Naive thymus-derived CD4-positive, alpha-beta T cell (primary cell): ENCODE measurements at regions of chr2 and their contacts with region 1.

Region 1: DNA sequence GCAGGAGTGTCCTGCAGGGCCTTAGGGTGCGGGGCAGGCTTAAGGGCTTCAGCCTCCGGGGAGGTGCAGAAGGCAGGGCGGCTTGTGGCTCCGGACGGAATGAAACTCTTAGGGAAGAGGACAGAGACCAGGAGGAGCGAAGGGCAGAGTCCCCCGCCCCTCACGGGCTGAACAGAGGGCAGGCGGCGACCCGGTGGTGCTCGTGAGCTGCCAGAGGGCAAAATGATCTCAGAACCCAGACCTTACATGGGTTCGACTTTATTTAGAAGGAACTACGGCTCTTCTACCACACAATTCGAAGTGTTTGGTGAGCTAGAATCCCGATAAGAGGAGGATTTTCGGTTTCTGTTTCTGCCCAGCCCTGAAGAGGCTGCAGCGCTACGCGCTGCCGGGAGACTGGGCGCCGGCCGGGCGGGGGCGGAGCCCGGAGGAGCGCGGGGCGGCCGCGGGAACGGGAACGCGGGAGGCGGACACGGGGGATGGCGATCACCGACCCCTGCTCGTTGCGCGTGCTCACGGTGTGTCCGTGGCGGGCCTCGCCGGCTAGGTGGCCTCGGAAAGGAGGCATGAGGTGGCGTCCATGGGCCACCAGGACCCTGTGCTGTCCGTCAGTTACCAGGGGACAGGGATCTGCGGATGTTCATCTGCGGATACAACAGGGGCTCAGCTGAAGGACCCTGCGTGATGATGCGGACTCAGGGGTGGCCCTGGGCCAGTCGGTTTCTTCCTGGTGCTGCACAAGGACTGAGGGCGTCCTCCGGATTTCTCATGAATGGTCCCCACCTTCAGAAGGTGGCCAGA is 4.2 kb upstream of the SP100 start:
- DNase-seq: peak; percentile 47 to 81 (median 61)
- ATAC-seq: peak; percentile 80
- H3K4me3 ChIP-seq: peak overlapping the region; percentile 96
- H3K4me3 Mint-ChIP-seq: peak overlapping the region; percentile 94 to 100 (median 100)
- H3K27ac ChIP-seq: peak overlapping the region; percentile 85
- H3K27ac Mint-ChIP-seq: peak overlapping the region; percentile 97 to 100 (median 99)
- H3K4me1 ChIP-seq: peaks cover 26 to 29% of the 10 kb centered on the region in 2 donors
- H3K4me1 Mint-ChIP-seq: peaks cover 30 to 92% (median 84%) of the 10 kb centered on the region in 7 donors
- H3K27me3 ChIP-seq: no peaks in the 10 kb centered on the region
- H3K27me3 Mint-ChIP-seq: no peaks in the 10 kb centered on the region

Region 2: DNA sequence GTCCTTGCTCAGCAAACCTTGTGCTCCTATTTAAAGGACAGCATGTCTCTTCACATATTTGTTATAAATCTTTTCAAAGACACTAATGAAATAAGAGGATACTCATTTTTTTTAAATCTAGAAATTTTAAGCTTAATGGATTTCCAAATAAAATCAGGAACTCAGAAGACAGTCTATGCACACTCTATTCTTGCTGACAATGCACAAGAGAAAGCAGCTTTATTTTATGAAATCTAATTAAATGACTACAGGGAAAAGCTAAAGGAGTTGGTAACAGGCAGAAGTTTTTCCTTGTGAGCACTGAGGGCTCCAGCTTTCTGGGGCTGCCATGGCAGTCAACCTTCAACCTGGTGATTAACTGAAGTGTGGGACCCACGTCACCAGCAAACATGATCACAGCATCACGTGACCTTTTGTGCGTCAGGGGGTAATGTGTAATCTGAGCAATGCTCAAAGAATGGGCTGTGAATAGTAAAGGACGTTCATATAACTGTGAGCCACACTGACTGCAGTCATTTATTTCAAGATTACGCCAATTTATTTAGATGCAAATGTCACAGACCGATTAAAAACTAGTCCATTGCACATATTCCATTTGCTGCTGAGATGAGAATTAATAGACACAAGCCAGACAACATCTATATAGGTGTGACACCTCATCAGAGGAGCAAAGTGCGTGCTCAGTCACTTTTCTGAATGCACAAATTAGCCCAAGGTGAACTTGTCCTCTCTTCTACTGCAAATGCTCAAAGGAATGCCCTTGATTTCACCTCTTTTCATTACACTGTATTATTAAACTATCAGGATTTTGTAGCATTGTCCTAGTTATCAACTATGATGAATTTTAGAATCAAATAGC is 685.8 kb before region 1 on chr2:
- CTCF ChIA-PET with region 1: no interaction called
- POLR2A ChIA-PET with region 1: no interaction called
- intact Hi-C with region 1: no loop called
- DNase-seq: no peak
- ATAC-seq: no peak
- H3K4me3 ChIP-seq: no peak overlapping the region
- H3K4me3 Mint-ChIP-seq: no peak overlapping the region
- H3K27ac ChIP-seq: no peak overlapping the region
- H3K27ac Mint-ChIP-seq: no peak overlapping the region
- H3K4me1 ChIP-seq: no peaks in the 10 kb centered on the region
- H3K4me1 Mint-ChIP-seq: peaks cover 0 to 4% (median 0%) of the 10 kb centered on the region in 7 donors
- H3K27me3 ChIP-seq: no peaks in the 10 kb centered on the region
- H3K27me3 Mint-ChIP-seq: peaks cover 0 to 25% (median 4%) of the 10 kb centered on the region in 5 donors

Region 3: DNA sequence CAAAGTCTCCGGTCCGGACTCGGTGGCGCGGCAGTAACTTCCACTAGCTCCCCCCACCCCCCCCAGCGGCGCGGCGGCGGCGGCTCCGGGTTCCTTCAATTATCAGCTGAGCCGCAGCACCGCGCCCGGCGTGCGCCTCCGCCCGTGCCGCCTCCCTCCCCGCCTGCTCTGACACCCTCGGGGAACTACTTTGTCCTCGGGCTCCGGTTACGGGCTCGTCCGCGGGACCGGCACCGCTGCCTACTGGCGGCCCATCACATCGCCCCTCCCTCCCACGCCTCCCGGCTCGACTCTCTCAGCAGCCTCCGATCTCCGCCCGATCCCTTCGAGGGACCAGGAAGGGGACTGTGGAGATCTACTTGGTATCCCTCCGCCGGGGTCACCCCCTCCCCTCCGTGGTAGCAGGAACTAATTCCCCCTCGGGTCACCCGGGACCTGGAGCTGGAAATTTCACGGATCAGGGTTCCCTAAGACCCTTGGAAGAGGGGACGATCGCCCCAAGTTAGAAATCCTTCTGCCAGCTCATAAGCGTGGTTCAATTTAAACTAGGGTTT is 489.8 kb before region 1 on chr2 and contains the start of gene TRIP12:
- CTCF ChIA-PET with region 1: no interaction called
- POLR2A ChIA-PET with region 1: no interaction called
- intact Hi-C with region 1: loop called in 1 of 2 experiments (anchors 10 kb)
- DNase-seq: peak; percentile 87 to 97 (median 95)
- ATAC-seq: peak; percentile 88
- H3K4me3 ChIP-seq: peak within 1 kb of the TSS; percentile 99
- H3K4me3 Mint-ChIP-seq: peak within 1 kb of the TSS; percentile 85 to 99 (median 96)
- H3K27ac ChIP-seq: peak within 1 kb of the TSS; percentile 98
- H3K27ac Mint-ChIP-seq: peak within 1 kb of the TSS; percentile 93 to 100 (median 98)
- H3K4me1 ChIP-seq: peaks cover 18 to 35% of the 10 kb centered on the region in 2 donors
- H3K4me1 Mint-ChIP-seq: peaks cover 30 to 62% (median 49%) of the 10 kb centered on the region in 7 donors
- H3K27me3 ChIP-seq: no peaks in the 10 kb centered on the region
- H3K27me3 Mint-ChIP-seq: no peaks in the 10 kb centered on the region
- total RNA-seq, gene TRIP12: 184 to 247 (median 231) TPM

Region 4: DNA sequence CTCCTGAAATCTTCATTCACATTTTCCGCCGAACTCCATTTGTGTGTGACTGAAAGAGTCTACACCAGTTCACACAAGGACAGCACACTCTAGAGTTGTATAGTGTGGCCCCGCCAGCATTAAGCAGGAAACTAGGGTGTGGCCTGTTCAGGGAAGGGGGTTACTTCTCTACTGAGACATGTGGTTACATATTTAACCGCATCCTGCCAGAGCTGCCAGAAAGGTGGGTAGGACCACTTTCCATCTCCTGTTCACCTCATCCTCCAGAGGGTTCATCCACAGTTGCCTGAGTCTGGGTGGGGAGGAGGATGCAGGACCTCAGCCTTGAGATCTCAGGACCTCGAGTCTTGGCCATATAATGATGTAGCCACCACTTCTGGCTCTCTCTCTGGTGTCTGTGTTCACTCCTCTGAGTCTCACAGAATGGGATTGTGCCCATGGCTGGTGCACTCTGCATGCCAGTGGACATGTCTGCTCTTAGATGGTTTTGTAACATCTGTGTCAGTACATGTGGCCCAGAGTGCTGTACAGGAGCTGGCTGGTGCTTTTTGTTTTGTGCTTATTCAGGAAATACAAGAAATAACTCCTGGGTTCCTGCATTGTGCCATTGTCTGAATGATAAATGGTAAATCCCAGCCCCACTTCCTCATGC is 92.4 kb before region 1 on chr2:
- CTCF ChIA-PET with region 1: no interaction called
- POLR2A ChIA-PET with region 1: interaction called, 4 read pairs
- intact Hi-C with region 1: loop called in 1 of 2 experiments (anchors 2 kb)
- DNase-seq: peak in 8 of 9 donors; percentile 56 to 94 (median 90)
- ATAC-seq: peak; percentile 96
- H3K4me3 ChIP-seq: peak overlapping the region; percentile 34
- H3K4me3 Mint-ChIP-seq: peak overlapping the region; percentile 54 to 85 (median 77)
- H3K27ac ChIP-seq: peak overlapping the region; percentile 72
- H3K27ac Mint-ChIP-seq: peak overlapping the region; percentile 85 to 96 (median 91)
- H3K4me1 ChIP-seq: peaks cover 49 to 63% of the 10 kb centered on the region in 2 donors
- H3K4me1 Mint-ChIP-seq: peaks cover 47 to 89% (median 83%) of the 10 kb centered on the region in 7 donors
- H3K27me3 ChIP-seq: no peaks in the 10 kb centered on the region
- H3K27me3 Mint-ChIP-seq: no peaks in the 10 kb centered on the region

Region 5: DNA sequence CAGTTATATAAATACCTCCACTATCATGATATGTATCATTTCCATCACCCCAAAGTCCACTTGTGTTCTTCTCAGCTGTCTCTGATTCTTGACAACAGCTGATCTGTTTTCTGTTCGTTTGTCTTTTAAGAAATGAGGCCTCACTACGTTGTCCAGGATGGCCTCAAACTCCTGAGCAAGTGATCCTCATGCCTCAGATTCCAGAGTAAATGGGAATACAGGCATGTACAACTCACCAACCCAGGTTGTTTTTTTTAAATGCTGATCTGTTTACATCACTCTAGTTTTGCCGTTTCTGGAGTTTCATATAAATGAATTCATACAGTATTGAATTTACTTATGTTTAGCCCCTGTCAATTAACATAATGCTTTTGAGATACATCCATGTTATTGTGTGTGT is 34.7 kb before region 1 on chr2:
- CTCF ChIA-PET with region 1: no interaction called
- POLR2A ChIA-PET with region 1: no interaction called
- intact Hi-C with region 1: no loop called
- DNase-seq: no peak
- ATAC-seq: no peak
- H3K4me3 ChIP-seq: no peak overlapping the region
- H3K4me3 Mint-ChIP-seq: no peak overlapping the region
- H3K27ac ChIP-seq: no peak overlapping the region
- H3K27ac Mint-ChIP-seq: peak overlapping the region in 5 of 9 donors; percentile 2 to 70 (median 38)
- H3K4me1 ChIP-seq: no peaks in the 10 kb centered on the region
- H3K4me1 Mint-ChIP-seq: peaks cover 14 to 52% (median 34%) of the 10 kb centered on the region in 7 donors
- H3K27me3 ChIP-seq: no peaks in the 10 kb centered on the region
- H3K27me3 Mint-ChIP-seq: no peaks in the 10 kb centered on the region

Region 6: DNA sequence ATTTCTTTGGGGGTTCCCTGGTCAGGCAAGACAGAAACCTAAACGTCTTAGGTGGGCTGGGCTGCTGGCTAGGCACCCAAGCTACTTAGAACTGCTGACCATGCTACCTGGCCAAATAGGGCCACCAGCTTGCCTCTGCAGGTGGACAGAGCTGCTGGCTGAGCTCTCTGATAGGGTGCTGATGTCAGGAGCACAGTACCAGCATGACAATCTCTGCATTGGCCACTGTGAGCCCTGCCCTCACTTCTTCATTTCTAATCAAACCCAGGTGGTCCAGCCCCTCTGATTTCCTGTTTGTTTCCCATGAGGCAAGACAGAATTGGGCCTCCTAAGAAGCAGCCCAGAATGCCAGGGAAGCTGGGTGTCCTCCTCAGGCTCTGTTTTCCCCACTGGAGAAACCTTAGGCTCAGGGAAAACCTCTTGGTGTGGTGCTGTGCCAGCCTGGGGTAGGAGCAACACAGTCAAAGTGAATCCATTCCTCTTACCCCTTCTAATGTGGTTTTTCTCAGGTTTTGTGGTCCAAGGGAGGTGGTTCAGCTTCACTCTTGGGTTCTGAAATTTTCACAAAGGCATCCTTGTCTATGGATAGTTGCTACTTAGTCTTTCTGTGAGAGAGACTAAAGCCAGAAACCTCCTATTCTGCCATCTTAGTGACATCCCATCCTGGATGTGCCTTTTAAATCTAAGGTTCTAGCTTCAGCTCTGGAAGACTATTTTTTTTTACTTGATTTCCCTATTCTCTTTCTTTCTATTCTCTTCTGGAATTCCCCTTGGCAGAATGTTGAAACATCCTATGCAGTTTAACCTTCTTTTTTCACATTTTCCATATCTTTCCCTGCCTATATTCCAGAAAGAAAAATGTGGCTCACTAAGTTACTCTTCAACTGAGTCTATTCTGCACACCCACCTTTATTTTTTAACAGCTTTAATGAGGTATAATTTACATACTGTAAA is 19.5 kb after region 1 on chr2:
- CTCF ChIA-PET with region 1: no interaction called
- POLR2A ChIA-PET with region 1: interaction called, 16 read pairs
- intact Hi-C with region 1: no loop called
- DNase-seq: peak in 1 of 9 donors; percentile 32
- ATAC-seq: peak; percentile 65
- H3K4me3 ChIP-seq: no peak overlapping the region
- H3K4me3 Mint-ChIP-seq: peak overlapping the region; percentile 6 to 60 (median 54)
- H3K27ac ChIP-seq: peak overlapping the region; percentile 37
- H3K27ac Mint-ChIP-seq: peak overlapping the region; percentile 19 to 81 (median 45)
- H3K4me1 ChIP-seq: peaks cover 24 to 26% of the 10 kb centered on the region in 2 donors
- H3K4me1 Mint-ChIP-seq: peaks cover 44 to 68% (median 62%) of the 10 kb centered on the region in 7 donors
- H3K27me3 ChIP-seq: no peaks in the 10 kb centered on the region
- H3K27me3 Mint-ChIP-seq: no peaks in the 10 kb centered on the region

Region 7: GRCh38 chr2:230520875-230521155 is 109.0 kb after region 1 on chr2:
- CTCF ChIA-PET with region 1: no interaction called
- POLR2A ChIA-PET with region 1: no interaction called
- intact Hi-C with region 1: no loop called
- DNase-seq: no peak
- ATAC-seq: no peak
- H3K4me3 ChIP-seq: no peak overlapping the region
- H3K4me3 Mint-ChIP-seq: no peak overlapping the region
- H3K27ac ChIP-seq: no peak overlapping the region
- H3K27ac Mint-ChIP-seq: no peak overlapping the region
- H3K4me1 ChIP-seq: peaks cover 0 to 4% of the 10 kb centered on the region in 2 donors
- H3K4me1 Mint-ChIP-seq: peaks cover 0 to 16% (median 10%) of the 10 kb centered on the region in 7 donors
- H3K27me3 ChIP-seq: no peaks in the 10 kb centered on the region
- H3K27me3 Mint-ChIP-seq: no peaks in the 10 kb centered on the region

Region 8: GRCh38 chr2:230602562-230603230 is 190.9 kb after region 1 on chr2:
- CTCF ChIA-PET with region 1: no interaction called
- POLR2A ChIA-PET with region 1: interaction called, 13 read pairs
- intact Hi-C with region 1: no loop called
- DNase-seq: peak in 7 of 9 donors; percentile 51 to 79 (median 74)
- ATAC-seq: peak; percentile 90
- H3K4me3 ChIP-seq: peak overlapping the region; percentile 14
- H3K4me3 Mint-ChIP-seq: peak overlapping the region; percentile 66 to 90 (median 78)
- H3K27ac ChIP-seq: peak overlapping the region; percentile 64
- H3K27ac Mint-ChIP-seq: peak overlapping the region; percentile 93 to 99 (median 98)
- H3K4me1 ChIP-seq: peaks cover 35 to 38% of the 10 kb centered on the region in 2 donors
- H3K4me1 Mint-ChIP-seq: peaks cover 27 to 84% (median 71%) of the 10 kb centered on the region in 7 donors
- H3K27me3 ChIP-seq: no peaks in the 10 kb centered on the region
- H3K27me3 Mint-ChIP-seq: no peaks in the 10 kb centered on the region

Region 9: GRCh38 chr2:230712443-230713330 is 300.9 kb after region 1 on chr2 and contains the start of gene CAB39:
- CTCF ChIA-PET with region 1: no interaction called
- POLR2A ChIA-PET with region 1: no interaction called
- intact Hi-C with region 1: loop called (anchors 2 to 5 kb)
- DNase-seq: peak; percentile 82 to 94 (median 90)
- ATAC-seq: peak; percentile 96
- H3K4me3 ChIP-seq: peak within 1 kb of the TSS; percentile 92
- H3K4me3 Mint-ChIP-seq: peak within 1 kb of the TSS; percentile 91 to 99 (median 98)
- H3K27ac ChIP-seq: peak within 1 kb of the TSS; percentile 91
- H3K27ac Mint-ChIP-seq: peak within 1 kb of the TSS; percentile 92 to 98 (median 97)
- H3K4me1 ChIP-seq: peaks cover 27 to 35% of the 10 kb centered on the region in 2 donors
- H3K4me1 Mint-ChIP-seq: peaks cover 31 to 53% (median 50%) of the 10 kb centered on the region in 7 donors
- H3K27me3 ChIP-seq: no peaks in the 10 kb centered on the region
- H3K27me3 Mint-ChIP-seq: no peaks in the 10 kb centered on the region
- total RNA-seq, gene CAB39: 71.0 to 186 (median 95.4) TPM

Region 10: DNA sequence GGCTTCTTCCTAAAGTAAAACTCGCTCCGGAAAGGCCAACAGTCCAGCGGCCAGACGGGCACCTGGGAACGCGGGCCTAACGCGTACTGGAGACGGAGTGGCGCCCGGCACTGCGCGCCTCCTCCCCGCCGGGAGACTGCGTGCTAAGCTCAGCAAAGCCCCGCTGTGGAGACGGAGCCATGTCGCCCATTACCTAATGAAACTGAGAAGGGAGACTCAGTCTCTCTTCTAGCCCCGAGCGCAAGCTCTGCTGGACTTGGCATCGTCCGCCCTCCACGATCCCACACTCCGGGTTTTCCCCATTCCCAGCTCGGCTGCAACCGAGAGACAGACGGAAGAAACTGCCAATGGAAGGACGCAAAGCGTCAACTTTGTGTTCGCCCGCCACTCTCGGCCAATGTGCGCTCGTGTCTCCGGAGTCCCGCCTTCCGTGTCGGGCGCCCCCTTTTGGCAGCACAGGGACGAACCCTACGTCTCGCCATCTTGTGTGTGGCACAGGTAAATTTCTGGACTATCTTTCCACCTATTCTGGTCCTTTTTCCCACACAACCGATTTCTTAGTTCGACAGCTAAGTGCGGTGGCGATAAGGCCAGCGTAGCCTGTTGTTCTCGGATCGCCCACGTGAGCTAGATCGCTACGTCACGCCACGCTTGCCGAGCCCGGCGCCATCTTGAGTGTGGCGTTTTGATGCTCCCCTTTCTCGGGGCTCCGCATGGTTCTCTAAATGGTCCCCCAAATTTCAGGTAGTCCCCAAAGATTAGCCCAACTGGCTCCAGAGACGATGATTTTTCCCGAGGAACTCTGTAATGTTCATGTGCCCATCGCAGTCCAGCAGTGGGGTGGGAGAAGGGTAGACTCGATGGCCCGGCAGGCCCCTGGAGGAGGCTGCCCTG is 1295.2 kb after region 1 on chr2:
- CTCF ChIA-PET with region 1: no interaction called
- POLR2A ChIA-PET with region 1: no interaction called
- intact Hi-C with region 1: loop called in 1 of 2 experiments (anchors 10 kb)
- DNase-seq: peak; percentile 96 to 99 (median 97)
- ATAC-seq: peak; percentile 62
- H3K4me3 ChIP-seq: peak overlapping the region; percentile 78
- H3K4me3 Mint-ChIP-seq: peak overlapping the region; percentile 95 to 99 (median 97)
- H3K27ac ChIP-seq: peak overlapping the region; percentile 100
- H3K27ac Mint-ChIP-seq: peak overlapping the region; percentile 100
- H3K4me1 ChIP-seq: peaks cover 19 to 21% of the 10 kb centered on the region in 2 donors
- H3K4me1 Mint-ChIP-seq: peaks cover 11 to 34% (median 23%) of the 10 kb centered on the region in 7 donors
- H3K27me3 ChIP-seq: no peaks in the 10 kb centered on the region
- H3K27me3 Mint-ChIP-seq: peaks cover 0 to 6% (median 0%) of the 10 kb centered on the region in 5 donors